Sciatic nerve (tissue), 2 donors: ENCODE measurements at regions of chr10 and their contacts with region 1.

Region 1: DNA sequence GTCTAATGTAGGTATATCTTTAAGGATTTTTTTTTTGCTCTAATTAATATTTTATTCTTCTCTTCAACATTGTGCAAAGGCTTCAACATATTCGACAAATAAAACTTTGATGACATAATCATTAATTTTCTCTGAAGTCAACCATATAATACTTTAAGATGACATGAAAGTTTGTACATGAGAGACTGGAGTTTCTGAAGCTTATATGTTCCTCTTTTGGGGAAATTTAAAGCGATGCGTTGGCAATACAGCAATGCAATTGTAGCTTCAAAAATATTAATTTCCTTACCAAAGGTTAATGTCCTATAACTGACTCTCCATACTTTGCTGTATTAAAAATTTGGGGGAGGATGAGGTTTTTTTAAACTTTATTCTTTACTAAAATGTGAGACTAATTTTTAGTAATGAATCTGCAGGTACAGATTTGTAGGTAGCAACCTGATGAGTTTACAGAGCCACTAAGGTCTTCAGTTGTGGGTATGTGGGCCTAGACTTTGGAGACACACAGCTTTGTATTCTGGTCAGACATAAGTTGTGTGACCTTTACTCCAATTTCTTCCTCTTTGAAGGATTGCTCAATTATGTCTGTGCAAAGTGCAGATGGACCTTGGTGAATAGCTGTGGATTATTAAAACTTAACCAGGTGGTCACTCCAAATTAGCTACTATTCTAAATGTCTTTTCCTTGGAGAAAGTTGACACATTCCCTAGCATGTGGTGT is 18.0 kb upstream of the LIPA start:
- DNase-seq: no peak
- ATAC-seq: peak; percentile 36

Region 2: GRCh38 chr10:89829887-89830269 is 560.3 kb after region 1 on chr10:
- intact Hi-C with region 1: loop called (anchors 5 kb)
- DNase-seq: no peak
- ATAC-seq: peak; percentile 51